Naive thymus-derived CD4-positive, alpha-beta T cell (primary cell): ENCODE measurements at regions of chr17 and their contacts with region 1.

Region 1: GRCh38 chr17:32755045-32755805 is 121.7 kb downstream of the MYO1D start:
- DNase-seq: peak in 7 of 9 donors; percentile 33 to 64 (median 57)
- ATAC-seq: peak; percentile 94
- H3K4me3 ChIP-seq: no peak overlapping the region
- H3K4me3 Mint-ChIP-seq: no peak overlapping the region
- H3K27ac ChIP-seq: no peak overlapping the region
- H3K27ac Mint-ChIP-seq: no peak overlapping the region
- H3K4me1 ChIP-seq: peaks cover 7% of the 10 kb centered on the region in 2 donors
- H3K4me1 Mint-ChIP-seq: peaks cover 5 to 13% (median 12%) of the 10 kb centered on the region in 7 donors
- H3K27me3 ChIP-seq: no peaks in the 10 kb centered on the region
- H3K27me3 Mint-ChIP-seq: no peaks in the 10 kb centered on the region

Region 2: GRCh38 chr17:32659419-32659842 is 95.8 kb before region 1 on chr17:
- CTCF ChIA-PET with region 1: interaction called, 3 read pairs
- POLR2A ChIA-PET with region 1: no interaction called
- intact Hi-C with region 1: loop called (anchors 1 kb)
- DNase-seq: peak; percentile 21 to 64 (median 49)
- ATAC-seq: peak; percentile 81
- H3K4me3 ChIP-seq: no peak overlapping the region
- H3K4me3 Mint-ChIP-seq: no peak overlapping the region
- H3K27ac ChIP-seq: no peak overlapping the region
- H3K27ac Mint-ChIP-seq: no peak overlapping the region
- H3K4me1 ChIP-seq: no peaks in the 10 kb centered on the region
- H3K4me1 Mint-ChIP-seq: peaks cover 0 to 4% (median 0%) of the 10 kb centered on the region in 7 donors
- H3K27me3 ChIP-seq: no peaks in the 10 kb centered on the region
- H3K27me3 Mint-ChIP-seq: peaks cover 0 to 2% (median 0%) of the 10 kb centered on the region in 5 donors